ENCODE measurements at regions of chr19 and their contacts with region 1.

Region 1: DNA sequence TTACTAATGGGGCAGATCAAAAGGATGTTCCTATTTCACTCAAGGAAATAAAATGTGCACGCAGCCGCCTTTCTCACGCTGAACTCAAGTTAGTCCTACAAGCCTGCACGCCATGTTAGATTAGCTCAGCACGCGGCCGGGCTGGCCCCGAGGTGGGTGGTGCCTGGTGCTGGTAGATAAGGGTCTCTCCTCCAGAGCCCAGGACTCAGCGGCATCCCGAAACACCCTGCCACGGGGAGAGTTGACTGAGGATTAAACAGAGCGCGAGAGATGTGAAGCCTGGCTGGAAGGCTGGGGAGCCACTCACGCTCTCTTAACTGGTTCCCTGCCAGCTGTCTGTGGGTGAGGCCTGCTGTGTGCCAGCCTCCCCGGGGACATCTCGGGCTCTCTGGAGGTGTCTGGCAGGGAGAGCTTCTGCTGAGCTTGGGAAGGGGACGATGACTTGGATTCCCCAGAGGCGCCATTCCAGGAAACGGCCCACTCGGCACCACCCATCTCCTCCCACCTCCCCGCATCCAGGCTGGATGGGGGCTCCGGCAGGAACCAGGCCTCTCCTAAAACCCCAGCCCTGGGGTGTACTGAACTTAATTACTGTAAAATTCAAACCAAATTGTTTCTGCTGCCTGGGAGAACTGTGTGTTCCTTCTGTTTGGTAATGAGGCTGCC is 122.2 kb downstream of the KDM4B start:
- DNase-seq: peak; percentile 83
- H3K4me3 ChIP-seq: peak overlapping the region in 2 of 4 donors; percentile 4 to 11
- H3K27ac ChIP-seq: peak overlapping the region; percentile 68 to 84 (median 78)
- H3K4me1 ChIP-seq: peaks cover 0 to 38% (median 29%) of the 10 kb centered on the region in 4 donors
- H3K27me3 ChIP-seq: no peaks in the 10 kb centered on the region
- CTCF ChIP-seq: no peak
- EP300 ChIP-seq: no peak
- POLR2A ChIP-seq: no peak

Region 2: DNA sequence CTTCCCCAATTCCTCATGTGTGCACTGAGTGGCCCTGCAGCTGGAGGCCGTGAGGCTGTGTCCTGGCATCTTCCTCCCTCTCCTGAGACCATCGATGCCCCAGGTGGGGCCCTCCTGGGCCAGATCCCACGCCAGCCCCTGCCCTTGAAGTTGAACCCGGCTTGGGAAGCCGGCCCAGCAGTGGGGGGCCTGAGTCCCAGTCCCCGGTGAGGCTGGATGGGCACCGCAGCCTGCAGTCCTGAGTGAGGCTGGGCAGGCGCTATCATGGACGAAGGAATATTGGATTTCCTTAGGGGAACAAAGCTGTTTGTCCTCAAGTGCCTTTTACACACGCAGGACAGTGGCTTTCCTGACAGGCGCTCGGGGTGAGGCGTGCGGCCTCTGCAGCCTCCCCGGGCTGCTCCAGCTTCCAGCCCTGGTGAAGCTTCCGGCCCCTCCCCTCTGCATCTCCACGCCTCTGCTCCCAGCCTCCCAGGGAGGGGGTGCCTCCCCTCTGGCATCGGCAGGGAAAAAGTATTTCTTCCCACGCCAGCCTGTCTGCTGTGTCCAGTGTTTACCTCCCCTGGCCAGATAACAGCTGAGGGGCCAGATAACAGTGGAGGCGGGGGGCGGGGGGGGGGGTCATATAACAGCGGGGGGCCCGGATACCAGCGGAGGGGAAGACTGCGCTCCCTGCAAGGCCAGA is 37.2 kb after region 1 on chr19:
- intact Hi-C with region 1: loop called (anchors 5 kb)
- DNase-seq: peak; percentile 85
- H3K4me3 ChIP-seq: peak overlapping the region in 1 of 4 donors; percentile 4
- H3K27ac ChIP-seq: peak overlapping the region; percentile 42 to 67 (median 52)
- H3K4me1 ChIP-seq: peaks cover 0 to 26% (median 20%) of the 10 kb centered on the region in 4 donors
- H3K27me3 ChIP-seq: no peaks in the 10 kb centered on the region
- CTCF ChIP-seq: no peak
- EP300 ChIP-seq: no peak
- POLR2A ChIP-seq: no peak

Region 3: DNA sequence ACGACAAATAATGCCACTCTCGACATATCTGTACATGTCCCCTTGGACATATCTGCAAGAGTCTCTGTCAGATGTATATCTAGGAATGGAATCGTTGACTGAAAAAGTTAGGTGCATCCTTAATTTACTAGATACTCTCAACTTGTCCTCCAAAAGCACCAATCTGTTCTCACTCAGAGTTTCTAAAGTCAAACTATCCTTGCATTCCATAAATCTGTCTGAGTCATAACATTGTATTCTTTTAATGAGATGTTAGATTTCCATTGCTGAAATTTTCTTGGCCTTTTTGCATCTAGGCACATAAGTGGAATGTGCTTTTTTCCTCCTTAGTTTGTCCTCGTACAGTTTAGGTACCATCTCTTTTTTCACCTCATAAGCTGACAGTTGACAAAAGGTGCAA is 109.7 kb after region 1 on chr19:
- intact Hi-C with region 1: no loop called
- DNase-seq: no peak
- H3K4me3 ChIP-seq: no peak overlapping the region
- H3K27ac ChIP-seq: no peak overlapping the region
- H3K4me1 ChIP-seq: no peaks in the 10 kb centered on the region
- H3K27me3 ChIP-seq: no peaks in the 10 kb centered on the region
- CTCF ChIP-seq: no peak
- EP300 ChIP-seq: no peak
- POLR2A ChIP-seq: no peak